ENCODE measurements at regions of chr17 and their contacts with region 1.

Region 1: GRCh38 chr17:8455665-8456209 is 20.1 kb downstream of the NDEL1 start:
- DNase-seq: no peak
- H3K4me3 ChIP-seq: no peak overlapping the region
- H3K27ac ChIP-seq: no peak overlapping the region
- H3K4me1 ChIP-seq: no peaks in the 10 kb centered on the region
- H3K27me3 ChIP-seq: no peaks in the 10 kb centered on the region
- CTCF ChIP-seq: no peak

Region 2: DNA sequence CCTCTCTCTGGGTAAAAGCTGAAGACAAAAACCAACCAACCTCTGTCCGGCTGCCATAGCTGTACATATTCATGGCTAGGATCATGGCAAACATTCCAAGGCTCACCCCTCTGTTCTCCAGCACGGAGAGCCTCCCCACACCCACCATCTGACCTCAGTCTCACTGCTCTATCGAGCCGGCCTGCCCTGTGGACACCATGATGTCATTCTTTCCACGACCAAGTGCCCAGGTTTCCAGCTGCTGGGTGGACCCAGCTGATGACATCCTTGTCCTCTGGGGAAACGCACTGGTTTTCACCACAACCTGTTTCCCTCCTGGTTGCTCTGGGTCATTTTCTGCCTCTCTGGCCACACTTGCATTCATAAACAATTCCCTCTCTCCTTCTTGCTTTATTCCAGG is 47.6 kb after region 1 on chr17:
- intact Hi-C with region 1: loop called (anchors 10 kb)
- DNase-seq: peak; percentile 50 to 74
- H3K4me3 ChIP-seq: no peak overlapping the region
- H3K27ac ChIP-seq: peak overlapping the region; percentile 46 to 47
- H3K4me1 ChIP-seq: peaks cover 0 to 21% (median 6%) of the 10 kb centered on the region in 4 donors
- H3K27me3 ChIP-seq: no peaks in the 10 kb centered on the region
- CTCF ChIP-seq: no peak